K562 (cell line): ENCODE measurements at regions of chr14 and their contacts with region 1.

Region 1: GRCh38 chr14:34982417-34983147 is at the start of gene SRP54:
- DNase-seq: peak; percentile 94 to 97 (median 96)
- ATAC-seq: peak; percentile 88
- H3K4me3 ChIP-seq: peak within 1 kb of the TSS; percentile 59
- H3K27ac ChIP-seq: peak within 1 kb of the TSS; percentile 97
- H3K4me1 ChIP-seq: peaks cover 4 to 6% of the 10 kb centered on the region in 2 experiments; a peak in 4 of 5 replicates
- H3K27me3 ChIP-seq: no peaks in the 10 kb centered on the region
- CTCF ChIP-seq: peak in 1 of 3 experiments; percentile 35; a peak in 2 of 6 replicates
- EP300 ChIP-seq: peak; percentile 25; the same call in 1 of the 2 replicates
- POLR2A ChIP-seq: peak; percentile 86
- RAD21 ChIP-seq: no peak
- polyA plus RNA-seq, gene SRP54: 44.1 to 64.5 TPM

Region 2: GRCh38 chr14:34875031-34875922 is 107.3 kb before region 1 on chr14 and contains the start of gene BAZ1A:
- CTCF ChIA-PET with region 1: no interaction called
- POLR2A ChIA-PET with region 1: interaction called, 7 read pairs
- in situ Hi-C with region 1: no loop called
- intact Hi-C with region 1: loop called (anchors 2 kb)
- DNase-seq: peak; percentile 69 to 81 (median 70)
- ATAC-seq: peak; percentile 44
- H3K4me3 ChIP-seq: peak within 1 kb of the TSS; percentile 96
- H3K27ac ChIP-seq: peak within 1 kb of the TSS; percentile 98
- H3K4me1 ChIP-seq: peaks cover 6 to 11% of the 10 kb centered on the region in 2 experiments; a peak in 4 of 5 replicates
- H3K27me3 ChIP-seq: no peaks in the 10 kb centered on the region
- CTCF ChIP-seq: no peak
- EP300 ChIP-seq: no peak; the same call in 1 of the 2 replicates
- POLR2A ChIP-seq: peak; percentile 90
- RAD21 ChIP-seq: no peak
- polyA plus RNA-seq, gene BAZ1A: 22.0 to 23.6 TPM

Region 3: DNA sequence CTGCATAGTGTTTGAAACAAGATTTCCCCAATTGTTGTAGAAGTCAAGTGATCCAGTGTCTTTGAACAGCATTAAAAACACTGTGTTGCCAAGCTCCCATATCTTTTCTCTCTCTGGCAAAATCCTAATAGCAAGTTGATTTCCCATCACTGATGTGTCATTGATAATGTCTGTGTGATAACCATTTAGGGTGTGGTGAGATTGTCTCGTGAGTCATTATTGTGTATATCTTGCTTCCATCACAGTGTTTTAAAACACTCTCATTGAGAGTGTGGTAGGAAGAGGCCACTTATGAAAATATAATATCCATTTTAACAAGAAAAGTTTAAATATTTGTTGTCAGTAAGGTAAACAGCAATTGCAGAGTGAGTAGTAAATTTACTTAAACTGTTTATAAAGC is 214.4 kb after region 1 on chr14:
- CTCF ChIA-PET with region 1: no interaction called
- POLR2A ChIA-PET with region 1: no interaction called
- in situ Hi-C with region 1: no loop called
- intact Hi-C with region 1: no loop called
- DNase-seq: no peak
- ATAC-seq: no peak
- H3K4me3 ChIP-seq: no peak overlapping the region
- H3K27ac ChIP-seq: no peak overlapping the region
- H3K4me1 ChIP-seq: no peaks in the 10 kb centered on the region
- H3K27me3 ChIP-seq: no peaks in the 10 kb centered on the region
- CTCF ChIP-seq: no peak
- EP300 ChIP-seq: no peak
- POLR2A ChIP-seq: no peak
- RAD21 ChIP-seq: no peak